Vagina (tissue), 2 donors: ENCODE measurements at regions of chr15 and their contacts with region 1.

Region 1: DNA sequence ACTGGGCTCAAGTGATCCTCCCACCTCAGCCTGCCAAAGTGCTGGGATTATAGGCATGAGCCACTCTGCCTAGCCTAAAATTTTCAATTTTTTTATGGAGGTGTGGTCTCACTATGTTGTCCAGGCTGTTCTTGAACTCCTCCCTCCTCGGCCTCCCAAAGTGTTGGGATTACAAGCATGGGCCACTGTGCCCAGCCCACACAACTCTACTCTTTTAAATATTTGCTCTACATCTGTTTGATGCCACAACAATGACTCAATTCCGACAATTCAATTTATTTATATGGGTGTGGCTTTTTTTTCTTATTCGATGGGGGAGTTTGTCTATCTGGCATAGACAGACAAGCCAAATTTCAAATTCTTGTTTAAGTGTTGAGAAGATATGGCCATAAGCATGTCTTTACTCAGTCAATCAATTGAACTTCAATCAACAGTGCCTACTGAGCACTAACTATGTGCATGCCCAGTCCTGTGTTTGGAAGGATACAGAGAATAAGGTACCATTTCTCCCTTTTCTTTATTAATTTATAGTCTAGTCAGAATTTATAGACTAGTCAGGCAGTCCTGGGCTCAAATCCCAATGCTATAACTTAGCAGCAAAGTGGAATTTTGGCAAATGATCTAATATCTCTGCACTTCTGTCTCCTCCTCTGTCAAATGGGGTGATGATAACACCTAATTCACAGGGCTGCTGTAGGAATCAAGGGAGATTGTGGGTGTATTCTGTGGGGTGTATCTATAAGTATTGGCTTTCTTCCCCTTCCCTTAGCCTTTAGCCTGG is 54.6 kb upstream of the PIAS1 start:
- DNase-seq: no peak
- H3K4me3 ChIP-seq: no peak overlapping the region
- H3K27ac ChIP-seq: peak overlapping the region; percentile 53
- H3K4me1 ChIP-seq: peaks cover 14% of the 10 kb centered on the region
- H3K27me3 ChIP-seq: no peaks in the 10 kb centered on the region
- CTCF ChIP-seq: no peak
- POLR2A ChIP-seq: no peak

Region 2: DNA sequence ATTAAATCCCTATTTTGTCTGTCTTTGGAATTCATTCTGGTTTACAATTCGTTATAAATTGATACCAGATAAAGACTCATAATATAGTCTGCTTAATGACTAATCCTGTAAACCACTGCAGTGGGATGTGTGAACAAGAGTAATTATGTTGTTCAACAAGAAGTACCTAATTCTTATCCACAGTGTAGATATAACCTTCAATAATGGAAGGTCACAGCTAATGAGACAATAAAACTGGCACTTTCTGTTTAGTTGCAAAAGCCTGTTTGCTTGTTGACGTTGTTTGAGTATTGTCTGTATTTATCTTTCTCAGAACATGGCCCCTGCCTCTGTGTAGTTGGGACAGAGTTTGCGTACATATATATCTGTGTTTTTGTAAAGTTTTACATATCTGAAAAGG is 81.3 kb after region 1 on chr15:
- intact Hi-C with region 1: no loop called
- DNase-seq: no peak
- H3K4me3 ChIP-seq: no peak overlapping the region
- H3K27ac ChIP-seq: no peak overlapping the region
- H3K4me1 ChIP-seq: peaks cover 95% of the 10 kb centered on the region
- H3K27me3 ChIP-seq: no peaks in the 10 kb centered on the region
- CTCF ChIP-seq: no peak
- POLR2A ChIP-seq: no peak

Region 3: GRCh38 chr15:68464448-68465090 is 465.1 kb after region 1 on chr15:
- intact Hi-C with region 1: loop called (anchors 5 kb)
- DNase-seq: no peak
- H3K4me3 ChIP-seq: no peak overlapping the region
- H3K27ac ChIP-seq: no peak overlapping the region
- H3K4me1 ChIP-seq: no peaks in the 10 kb centered on the region
- H3K27me3 ChIP-seq: no peaks in the 10 kb centered on the region
- CTCF ChIP-seq: no peak
- POLR2A ChIP-seq: no peak